ENCODE measurements at regions of chr10 and their contacts with region 1.

Region 1: DNA sequence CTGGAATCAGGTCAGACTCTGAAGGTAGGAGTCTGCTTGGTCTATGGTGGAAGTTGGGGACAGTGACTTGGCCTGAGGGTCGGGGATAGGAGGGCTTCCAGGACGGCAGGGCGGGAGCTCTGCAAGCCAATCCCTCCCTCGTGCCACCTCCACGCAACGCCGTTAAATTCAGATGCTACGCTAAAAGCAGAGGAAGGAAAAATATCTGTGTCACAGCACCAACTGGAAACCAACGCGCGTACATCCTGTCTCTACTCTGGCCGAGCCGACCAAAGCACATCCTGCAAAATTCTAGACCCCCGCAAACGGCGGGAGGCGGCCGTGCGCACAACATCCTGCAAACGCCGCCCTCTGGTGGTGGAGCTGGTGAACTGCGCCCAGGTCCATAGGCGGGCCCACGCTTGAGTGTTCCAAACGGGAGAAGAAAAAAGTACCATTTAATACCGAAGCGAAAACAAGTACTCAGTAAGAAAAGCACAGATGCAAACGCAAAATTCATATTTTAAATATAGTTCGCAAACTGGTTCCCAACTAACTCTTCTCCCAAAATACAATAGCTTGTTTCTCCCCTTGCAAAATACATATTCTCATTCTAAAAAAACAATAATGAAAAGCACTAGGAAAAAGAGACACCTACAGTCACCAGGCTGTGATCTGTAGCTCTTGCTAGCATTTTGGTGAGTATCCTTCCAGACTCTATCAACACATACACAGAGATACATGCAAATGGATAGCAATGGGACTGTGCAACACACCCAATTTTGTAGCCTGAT is 45.7 kb upstream of the HSPA12A start:
- DNase-seq: peak; percentile 49 to 62
- ATAC-seq: peak; percentile 82 to 94
- H3K4me3 ChIP-seq: peak overlapping the region; percentile 40
- H3K27ac ChIP-seq: peak overlapping the region in 1 of 2 experiments; percentile 62; a peak in 3 of 6 replicates
- H3K4me1 ChIP-seq: no peaks in the 10 kb centered on the region
- CTCF ChIP-seq: peak; percentile 96
- EP300 ChIP-seq: no peak
- POLR2A ChIP-seq: no peak
- RAD21 ChIP-seq: peak; percentile 86 to 96

Region 2: DNA sequence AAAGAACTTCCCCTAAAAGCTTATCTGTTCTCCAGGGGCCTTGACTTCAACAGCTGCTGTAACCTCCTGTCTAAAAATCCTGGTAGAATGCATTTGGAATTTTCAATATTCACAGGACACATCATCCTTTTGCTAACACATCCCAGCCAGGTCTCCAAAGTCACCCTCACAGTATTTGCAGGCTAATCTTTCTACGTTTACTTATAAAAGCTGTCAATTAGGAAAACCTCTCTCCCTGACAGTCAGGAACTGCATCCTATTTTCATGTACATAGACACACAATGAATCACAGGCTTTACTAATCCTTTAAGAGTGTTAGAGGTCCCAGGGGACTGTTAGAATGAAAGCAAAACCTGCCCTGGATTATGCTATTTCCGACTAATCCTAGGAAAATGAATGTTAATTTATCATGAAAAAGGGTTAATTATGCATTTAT is 617.2 kb before region 1 on chr10:
- CTCF ChIA-PET with region 1: no interaction called
- POLR2A ChIA-PET with region 1: no interaction called
- DNase-seq: no peak
- ATAC-seq: no peak
- H3K4me3 ChIP-seq: no peak overlapping the region
- H3K27ac ChIP-seq: no peak overlapping the region
- H3K4me1 ChIP-seq: peaks cover 3% of the 10 kb centered on the region; the same call in 1 of the 3 replicates
- CTCF ChIP-seq: no peak
- EP300 ChIP-seq: no peak
- POLR2A ChIP-seq: no peak
- RAD21 ChIP-seq: no peak

Region 3: GRCh38 chr10:116683821-116684220 is 104.3 kb before region 1 on chr10:
- CTCF ChIA-PET with region 1: interaction called, 277 read pairs
- POLR2A ChIA-PET with region 1: interaction called, 3 read pairs
- DNase-seq: no peak
- ATAC-seq: no peak; a peak in 1 of 6 replicates
- H3K4me3 ChIP-seq: no peak overlapping the region
- H3K27ac ChIP-seq: no peak overlapping the region
- H3K4me1 ChIP-seq: no peaks in the 10 kb centered on the region
- CTCF ChIP-seq: no peak
- EP300 ChIP-seq: no peak
- POLR2A ChIP-seq: no peak
- RAD21 ChIP-seq: no peak

Region 4: DNA sequence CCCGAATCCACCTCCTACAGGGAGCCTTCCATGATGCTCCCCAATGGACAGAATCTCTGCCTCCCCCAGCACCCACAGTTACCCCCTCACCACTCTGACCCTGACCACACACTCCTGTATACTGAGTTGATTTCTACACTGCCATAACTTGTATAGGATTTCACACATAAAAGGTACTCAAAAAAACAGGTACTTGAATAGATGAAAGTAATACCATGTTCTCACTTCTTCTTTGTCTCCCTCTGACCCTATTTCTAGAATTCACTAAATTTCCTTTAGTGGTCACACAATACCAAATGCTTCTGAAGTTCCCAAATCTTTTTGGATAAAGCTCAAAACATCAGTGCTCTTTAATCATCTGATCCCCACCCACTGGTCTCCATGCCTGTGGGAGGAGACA is 91.2 kb before region 1 on chr10:
- CTCF ChIA-PET with region 1: interaction called, 32 read pairs
- POLR2A ChIA-PET with region 1: no interaction called
- DNase-seq: no peak
- ATAC-seq: no peak
- H3K4me3 ChIP-seq: no peak overlapping the region
- H3K27ac ChIP-seq: no peak overlapping the region
- H3K4me1 ChIP-seq: no peaks in the 10 kb centered on the region
- CTCF ChIP-seq: no peak
- EP300 ChIP-seq: no peak
- POLR2A ChIP-seq: no peak
- RAD21 ChIP-seq: no peak

Region 5: GRCh38 chr10:116742367-116743265 is 45.5 kb before region 1 on chr10 and contains the start of gene HSPA12A:
- CTCF ChIA-PET with region 1: interaction called, 22 read pairs
- POLR2A ChIA-PET with region 1: interaction called, 17 read pairs
- DNase-seq: peak; percentile 76 to 78
- ATAC-seq: peak; percentile 85 to 89
- H3K4me3 ChIP-seq: peak within 1 kb of the TSS; percentile 81
- H3K27ac ChIP-seq: peak within 1 kb of the TSS; percentile 90 to 98
- H3K4me1 ChIP-seq: peaks cover 12% of the 10 kb centered on the region
- CTCF ChIP-seq: no peak
- EP300 ChIP-seq: no peak
- POLR2A ChIP-seq: peak; percentile 94
- RAD21 ChIP-seq: no peak
- polyA plus RNA-seq, gene HSPA12A: 17.0 and 17.4 TPM in 2 replicates

Region 6: GRCh38 chr10:116765547-116766162 is 22.4 kb before region 1 on chr10:
- CTCF ChIA-PET with region 1: interaction called, 133 read pairs
- POLR2A ChIA-PET with region 1: no interaction called
- DNase-seq: no peak
- ATAC-seq: no peak
- H3K4me3 ChIP-seq: no peak overlapping the region
- H3K27ac ChIP-seq: peak overlapping the region; percentile 6 to 86; a peak in 4 of 6 replicates
- H3K4me1 ChIP-seq: peaks cover 40% of the 10 kb centered on the region
- CTCF ChIP-seq: 0 out of 3 replicates have a peak, but pooled peaks have one; percentile 14
- EP300 ChIP-seq: no peak
- POLR2A ChIP-seq: no peak
- RAD21 ChIP-seq: 0 out of 5 replicates have a peak, but pooled peaks of 1 of the 2 experiments have one; percentile 5

Region 7: GRCh38 chr10:116809483-116810119 is 21.5 kb after region 1 on chr10:
- CTCF ChIA-PET with region 1: interaction called, 23 read pairs
- POLR2A ChIA-PET with region 1: no interaction called
- DNase-seq: peak; percentile 44 to 48
- ATAC-seq: peak; percentile 62 to 86; a peak in 5 of 6 replicates
- H3K4me3 ChIP-seq: no peak overlapping the region; the same call in 2 of the 3 replicates
- H3K27ac ChIP-seq: peak overlapping the region in 1 of 2 experiments; percentile 34; a peak in 1 of 6 replicates
- H3K4me1 ChIP-seq: no peaks in the 10 kb centered on the region
- CTCF ChIP-seq: peak; percentile 44
- EP300 ChIP-seq: no peak
- POLR2A ChIP-seq: no peak
- RAD21 ChIP-seq: no peak

Region 8: GRCh38 chr10:116925056-116925455 is 137.0 kb after region 1 on chr10:
- CTCF ChIA-PET with region 1: no interaction called
- POLR2A ChIA-PET with region 1: no interaction called
- DNase-seq: no peak
- ATAC-seq: no peak
- H3K4me3 ChIP-seq: no peak overlapping the region
- H3K27ac ChIP-seq: no peak overlapping the region
- H3K4me1 ChIP-seq: no peaks in the 10 kb centered on the region
- CTCF ChIP-seq: no peak
- EP300 ChIP-seq: no peak
- POLR2A ChIP-seq: no peak
- RAD21 ChIP-seq: no peak